ENCODE measurements at regions of chr18 and their contacts with region 1.

Region 1: GRCh38 chr18:55775972-55776371 is 188.0 kb upstream of the TCF4 start:
- DNase-seq: no peak
- H3K4me3 ChIP-seq: no peak overlapping the region
- CTCF ChIP-seq: no peak

Region 2: GRCh38 chr18:55763298-55763697 is 12.7 kb before region 1 on chr18:
- CTCF ChIA-PET with region 1: interaction called, 15 read pairs
- POLR2A ChIA-PET with region 1: no interaction called
- DNase-seq: peak; percentile 10
- H3K4me3 ChIP-seq: no peak overlapping the region
- CTCF ChIP-seq: no peak

Region 3: GRCh38 chr18:55811925-55812324 is 36.0 kb after region 1 on chr18:
- CTCF ChIA-PET with region 1: no interaction called
- POLR2A ChIA-PET with region 1: no interaction called
- DNase-seq: no peak
- H3K4me3 ChIP-seq: no peak overlapping the region
- CTCF ChIP-seq: no peak

Measured in AG04449 (cell line).